ENCODE measurements at regions of chr19 and their contacts with region 1.

Region 1: GRCh38 chr19:16066611-16067104 is 9.6 kb upstream of the TPM4 start:
- DNase-seq: peak; percentile 82
- H3K4me3 ChIP-seq: peak overlapping the region in 6 of 8 donors; percentile 30 to 70 (median 46)
- H3K27ac ChIP-seq: peak overlapping the region; percentile 59 to 100 (median 94)
- H3K4me1 ChIP-seq: peaks cover 10 to 67% (median 37%) of the 10 kb centered on the region in 6 donors
- H3K27me3 ChIP-seq: no peaks in the 10 kb centered on the region
- CTCF ChIP-seq: peak in 10 of 11 experiments; percentile 26 to 81 (median 59)
- POLR2A ChIP-seq: no peak

Region 2: DNA sequence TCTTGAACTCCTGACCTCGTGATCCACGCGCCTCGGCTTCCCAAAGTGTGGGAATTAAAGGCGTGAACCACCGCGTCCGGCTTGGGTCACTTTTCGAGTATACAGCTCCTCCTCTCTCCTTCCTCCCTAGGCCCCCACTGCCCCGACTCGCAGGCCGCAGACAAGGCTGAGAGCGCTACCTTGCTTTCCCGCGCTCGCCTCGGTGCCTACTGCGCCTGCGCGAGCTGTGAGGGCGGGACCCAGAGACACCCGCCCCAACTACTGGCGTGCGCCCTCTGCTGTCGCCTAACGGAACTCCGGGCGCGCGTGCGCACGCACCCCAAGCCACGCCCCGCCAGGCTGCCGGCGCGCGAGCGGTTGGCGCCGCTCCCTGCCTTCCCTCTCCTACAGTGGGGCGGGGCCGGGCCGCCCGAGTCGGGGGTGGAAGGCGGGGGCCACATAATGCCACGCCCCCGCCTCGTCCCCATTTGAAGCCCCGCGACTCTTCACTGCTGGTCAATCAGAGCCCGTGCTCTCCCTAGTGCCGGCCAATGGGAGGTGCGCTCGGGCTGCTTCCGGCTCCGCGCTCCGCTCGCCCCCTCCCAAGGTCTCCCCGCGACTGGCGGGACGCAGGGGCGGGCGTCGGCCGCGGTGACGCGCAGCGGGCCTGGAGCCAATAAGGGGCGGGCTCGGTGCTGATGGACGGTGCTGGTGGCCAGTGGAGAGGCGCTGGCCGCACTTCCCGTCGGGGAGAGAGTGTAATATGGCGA is 44.7 kb after region 1 on chr19 and contains the start of gene RAB8A:
- intact Hi-C with region 1: loop called (anchors 5 kb)
- DNase-seq: peak; percentile 100
- H3K4me3 ChIP-seq: peak within 1 kb of the TSS; percentile 71 to 92 (median 82)
- H3K27ac ChIP-seq: peak within 1 kb of the TSS; percentile 77 to 97 (median 93)
- H3K4me1 ChIP-seq: peaks cover 32 to 58% (median 51%) of the 10 kb centered on the region in 6 donors
- H3K27me3 ChIP-seq: no peaks in the 10 kb centered on the region
- CTCF ChIP-seq: peak; percentile 99 to 100 (median 100)
- POLR2A ChIP-seq: no peak
- total RNA-seq, gene RAB8A: 71.9 to 104 (median 89.8) TPM

Measured in spleen (tissue), 13 donors.